ENCODE measurements at regions of chr20 and their contacts with region 1.

Region 1: GRCh38 chr20:3407771-3408637 is 535 bp upstream of the DNAAF9 start:
- DNase-seq: peak; percentile 41 to 68
- H3K4me3 ChIP-seq: peak overlapping the region; percentile 68
- H3K27ac ChIP-seq: no peak overlapping the region
- H3K4me1 ChIP-seq: peaks cover 5% of the 10 kb centered on the region; the same call in 1 of the 2 replicates
- H3K27me3 ChIP-seq: no peaks in the 10 kb centered on the region
- CTCF ChIP-seq: no peak

Region 2: GRCh38 chr20:3446779-3447178 is 38.8 kb after region 1 on chr20:
- CTCF ChIA-PET with region 1: no interaction called
- POLR2A ChIA-PET with region 1: no interaction called
- intact Hi-C with region 1: loop called (anchors 1 kb)
- DNase-seq: peak; percentile 71 to 92
- H3K4me3 ChIP-seq: no peak overlapping the region
- H3K27ac ChIP-seq: no peak overlapping the region
- H3K4me1 ChIP-seq: peaks cover 12% of the 10 kb centered on the region
- H3K27me3 ChIP-seq: no peaks in the 10 kb centered on the region
- CTCF ChIP-seq: no peak

Region 3: DNA sequence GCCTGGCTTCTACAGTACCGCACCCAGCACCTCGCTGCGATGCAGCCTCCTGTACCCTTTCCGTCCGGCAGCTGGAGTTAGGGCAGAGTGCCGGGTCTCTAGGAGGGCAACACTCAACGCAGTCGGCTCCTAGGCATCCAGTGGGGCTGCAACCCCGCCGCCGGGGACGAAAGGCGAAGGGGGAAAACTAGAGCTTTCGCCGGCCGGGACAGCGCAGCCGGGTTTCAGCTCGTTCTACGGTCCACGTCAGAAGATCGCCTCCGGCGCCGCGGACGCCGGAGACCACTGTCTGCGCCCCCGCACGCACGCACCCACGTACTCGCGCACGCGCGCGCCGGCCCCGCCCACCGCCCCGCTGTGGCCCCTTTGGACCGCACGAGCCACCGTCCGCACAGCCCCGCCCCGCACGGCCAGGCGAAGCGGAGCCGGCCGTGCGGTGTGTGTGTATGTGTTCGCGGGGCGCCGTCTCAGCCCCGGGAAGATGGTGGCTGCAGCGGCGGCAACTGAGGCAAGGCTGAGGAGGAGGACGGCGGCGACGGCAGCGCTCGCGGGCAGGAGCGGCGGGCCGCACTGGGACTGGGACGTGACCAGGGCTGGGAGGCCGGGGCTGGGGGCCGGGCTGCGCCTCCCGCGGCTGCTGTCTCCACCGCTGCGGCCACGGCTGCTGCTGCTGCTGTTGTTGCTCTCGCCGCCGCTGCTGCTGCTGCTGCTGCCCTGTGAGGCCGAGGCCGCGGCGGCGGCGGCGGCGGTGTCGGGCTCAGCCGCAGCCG is 62.8 kb after region 1 on chr20 and contains the start of gene ATRN:
- CTCF ChIA-PET with region 1: no interaction called
- POLR2A ChIA-PET with region 1: interaction called, 10 read pairs
- intact Hi-C with region 1: loop called (anchors 1 kb)
- DNase-seq: peak; percentile 49 to 91
- H3K4me3 ChIP-seq: peak within 1 kb of the TSS; percentile 80
- H3K27ac ChIP-seq: no peak within 1 kb of the TSS
- H3K4me1 ChIP-seq: peaks cover 22% of the 10 kb centered on the region
- H3K27me3 ChIP-seq: no peaks in the 10 kb centered on the region
- CTCF ChIP-seq: no peak
- total RNA-seq, gene ATRN: 34.9 and 35.0 TPM in 2 replicates

Region 4: DNA sequence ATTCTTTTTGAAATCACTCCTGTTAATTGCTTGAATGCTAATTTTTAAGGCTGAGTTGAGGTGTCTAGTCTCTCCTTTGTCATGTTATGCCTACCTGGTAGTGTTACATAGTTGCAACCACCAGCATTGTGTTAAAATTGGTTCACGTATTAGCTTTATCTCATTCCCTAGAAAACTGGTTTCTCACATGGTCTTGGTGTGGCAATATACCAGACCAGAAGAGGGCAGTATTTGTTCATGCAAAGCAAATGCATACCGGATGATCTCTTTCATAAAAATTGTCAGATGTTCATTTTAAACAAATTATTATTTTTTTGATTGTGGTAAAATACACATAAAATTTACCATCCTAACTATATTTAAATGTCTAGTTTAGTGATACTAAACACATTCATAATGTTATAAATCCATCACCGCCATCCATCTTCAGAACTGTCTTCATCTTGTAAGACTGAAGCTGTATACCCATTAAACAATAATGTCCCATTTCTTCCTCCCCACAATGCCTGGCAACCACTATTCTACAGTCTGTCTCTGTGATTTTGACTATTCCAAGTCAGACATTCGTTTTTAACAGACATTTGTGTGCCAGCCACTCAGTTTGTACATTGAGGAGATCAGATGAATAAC is 155.7 kb after region 1 on chr20:
- CTCF ChIA-PET with region 1: no interaction called
- POLR2A ChIA-PET with region 1: no interaction called
- intact Hi-C with region 1: loop called (anchors 5 kb)
- DNase-seq: peak in 1 of 2 experiments; percentile 15
- H3K4me3 ChIP-seq: no peak overlapping the region
- H3K27ac ChIP-seq: no peak overlapping the region
- H3K4me1 ChIP-seq: no peaks in the 10 kb centered on the region
- H3K27me3 ChIP-seq: no peaks in the 10 kb centered on the region
- CTCF ChIP-seq: peak; percentile 80

Region 5: GRCh38 chr20:3875378-3875974 is 467.5 kb after region 1 on chr20:
- CTCF ChIA-PET with region 1: interaction called, 11 read pairs
- POLR2A ChIA-PET with region 1: no interaction called
- intact Hi-C with region 1: no loop called
- DNase-seq: no peak
- H3K4me3 ChIP-seq: no peak overlapping the region
- H3K27ac ChIP-seq: no peak overlapping the region
- H3K4me1 ChIP-seq: peaks cover 18% of the 10 kb centered on the region
- H3K27me3 ChIP-seq: no peaks in the 10 kb centered on the region
- CTCF ChIP-seq: no peak

Region 6: GRCh38 chr20:5171064-5171789 is 1763.2 kb after region 1 on chr20:
- CTCF ChIA-PET with region 1: no interaction called
- POLR2A ChIA-PET with region 1: no interaction called
- intact Hi-C with region 1: no loop called
- DNase-seq: no peak
- H3K4me3 ChIP-seq: no peak overlapping the region
- H3K27ac ChIP-seq: no peak overlapping the region
- H3K4me1 ChIP-seq: peaks cover 18% of the 10 kb centered on the region
- H3K27me3 ChIP-seq: no peaks in the 10 kb centered on the region
- CTCF ChIP-seq: no peak

Measured in PC-9 (cell line).